ENCODE measurements at regions of chr3 and their contacts with region 1.

Region 1: DNA sequence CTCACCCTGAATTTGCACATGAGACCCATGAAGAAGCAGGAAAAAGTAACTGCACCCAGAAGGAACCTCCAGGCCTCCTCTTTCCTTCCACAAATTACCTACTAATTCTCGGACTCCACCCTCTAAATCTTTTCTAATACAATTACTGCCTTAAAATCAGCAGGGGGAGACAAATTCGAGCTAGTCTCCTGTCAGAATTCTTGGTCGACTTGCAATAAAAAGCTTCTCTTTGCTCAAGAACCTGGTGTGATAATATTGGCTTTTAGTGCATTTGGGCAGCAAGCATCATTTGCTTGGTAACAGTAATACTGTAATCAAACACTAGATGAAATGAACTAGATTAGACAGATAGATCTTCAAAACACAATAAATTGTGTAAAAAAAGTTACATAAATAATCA is 281.9 kb downstream of the RAP2B start:
- DNase-seq: peak in 5 of 9 donors; percentile 8 to 24 (median 12)
- ATAC-seq: no peak
- H3K4me3 ChIP-seq: no peak overlapping the region
- H3K4me3 Mint-ChIP-seq: no peak overlapping the region
- H3K27ac ChIP-seq: no peak overlapping the region
- H3K27ac Mint-ChIP-seq: peak overlapping the region in 1 of 9 donors; percentile 22
- H3K4me1 ChIP-seq: no peaks in the 10 kb centered on the region
- H3K4me1 Mint-ChIP-seq: peaks cover 5 to 26% (median 16%) of the 10 kb centered on the region in 7 donors
- H3K27me3 ChIP-seq: no peaks in the 10 kb centered on the region
- H3K27me3 Mint-ChIP-seq: no peaks in the 10 kb centered on the region

Region 2: DNA sequence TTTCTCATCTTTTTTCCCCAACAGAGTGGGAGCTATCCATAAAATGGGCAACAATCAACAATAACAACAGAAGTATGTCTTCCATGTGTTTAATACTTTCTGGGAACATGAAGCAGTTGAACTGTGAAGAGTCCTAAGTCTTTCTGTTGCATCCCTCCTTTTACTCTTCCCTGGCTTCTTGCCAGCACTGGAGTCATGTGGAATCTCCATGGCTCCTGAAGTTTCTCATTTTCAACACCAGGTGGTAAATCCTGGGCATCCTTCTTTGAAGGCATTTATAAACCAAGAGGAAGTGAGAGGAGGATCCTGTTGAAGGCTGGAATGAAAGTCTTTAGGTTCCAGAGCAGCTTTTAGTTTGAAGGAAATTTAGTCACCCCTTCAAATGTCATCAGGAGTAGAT is 649.2 kb before region 1 on chr3:
- CTCF ChIA-PET with region 1: no interaction called
- POLR2A ChIA-PET with region 1: no interaction called
- intact Hi-C with region 1: loop called in 1 of 2 experiments (anchors 10 kb)
- DNase-seq: no peak
- ATAC-seq: no peak
- H3K4me3 ChIP-seq: no peak overlapping the region
- H3K4me3 Mint-ChIP-seq: no peak overlapping the region
- H3K27ac ChIP-seq: no peak overlapping the region
- H3K27ac Mint-ChIP-seq: no peak overlapping the region
- H3K4me1 ChIP-seq: no peaks in the 10 kb centered on the region
- H3K4me1 Mint-ChIP-seq: peaks cover 0 to 12% (median 3%) of the 10 kb centered on the region in 7 donors
- H3K27me3 ChIP-seq: no peaks in the 10 kb centered on the region
- H3K27me3 Mint-ChIP-seq: peaks cover 0 to 5% (median 2%) of the 10 kb centered on the region in 5 donors

Region 3: DNA sequence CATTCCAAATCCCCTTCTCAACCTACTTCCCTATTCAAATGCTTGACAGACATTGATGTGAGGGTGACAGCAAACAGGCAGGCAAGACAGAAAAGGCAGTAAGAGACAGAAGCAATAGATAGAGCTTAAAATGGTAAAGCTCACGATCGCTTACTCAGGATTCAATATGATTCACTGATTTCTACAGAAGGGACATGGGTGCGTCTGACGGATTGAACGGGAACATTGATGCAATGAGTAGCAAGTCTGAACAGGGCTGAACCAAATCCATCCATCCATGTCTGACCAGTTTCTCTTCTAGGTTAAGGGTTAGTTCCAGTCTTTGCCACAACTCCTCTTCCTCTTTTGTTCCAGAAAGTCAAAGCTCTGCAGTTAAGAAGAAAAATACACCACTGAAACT is 573.9 kb before region 1 on chr3:
- CTCF ChIA-PET with region 1: no interaction called
- POLR2A ChIA-PET with region 1: no interaction called
- intact Hi-C with region 1: no loop called
- DNase-seq: no peak
- ATAC-seq: peak; percentile 45
- H3K4me3 ChIP-seq: no peak overlapping the region
- H3K4me3 Mint-ChIP-seq: no peak overlapping the region
- H3K27ac ChIP-seq: no peak overlapping the region
- H3K27ac Mint-ChIP-seq: no peak overlapping the region
- H3K4me1 ChIP-seq: no peaks in the 10 kb centered on the region
- H3K4me1 Mint-ChIP-seq: no peaks in the 10 kb centered on the region
- H3K27me3 ChIP-seq: no peaks in the 10 kb centered on the region
- H3K27me3 Mint-ChIP-seq: peaks cover 0 to 11% (median 4%) of the 10 kb centered on the region in 5 donors

Region 4: GRCh38 chr3:153595186-153595815 is 151.3 kb after region 1 on chr3:
- CTCF ChIA-PET with region 1: no interaction called
- POLR2A ChIA-PET with region 1: no interaction called
- intact Hi-C with region 1: loop called in 1 of 2 experiments (anchors 1 kb)
- DNase-seq: peak in 5 of 9 donors; percentile 1 to 25 (median 11)
- ATAC-seq: peak; percentile 45
- H3K4me3 ChIP-seq: no peak overlapping the region
- H3K4me3 Mint-ChIP-seq: no peak overlapping the region
- H3K27ac ChIP-seq: no peak overlapping the region
- H3K27ac Mint-ChIP-seq: no peak overlapping the region
- H3K4me1 ChIP-seq: no peaks in the 10 kb centered on the region
- H3K4me1 Mint-ChIP-seq: peaks cover 0 to 15% (median 6%) of the 10 kb centered on the region in 7 donors
- H3K27me3 ChIP-seq: no peaks in the 10 kb centered on the region
- H3K27me3 Mint-ChIP-seq: no peaks in the 10 kb centered on the region

Measured in naive thymus-derived CD4-positive, alpha-beta T cell (primary cell).